AG04449 (cell line): ENCODE measurements at regions of chr1 and their contacts with region 1.

Region 1: GRCh38 chr1:160219062-160219929 is 14.1 kb downstream of the PEA15 start:
- DNase-seq: peak; percentile 36
- H3K4me3 ChIP-seq: no peak overlapping the region
- CTCF ChIP-seq: peak; percentile 79

Region 2: DNA sequence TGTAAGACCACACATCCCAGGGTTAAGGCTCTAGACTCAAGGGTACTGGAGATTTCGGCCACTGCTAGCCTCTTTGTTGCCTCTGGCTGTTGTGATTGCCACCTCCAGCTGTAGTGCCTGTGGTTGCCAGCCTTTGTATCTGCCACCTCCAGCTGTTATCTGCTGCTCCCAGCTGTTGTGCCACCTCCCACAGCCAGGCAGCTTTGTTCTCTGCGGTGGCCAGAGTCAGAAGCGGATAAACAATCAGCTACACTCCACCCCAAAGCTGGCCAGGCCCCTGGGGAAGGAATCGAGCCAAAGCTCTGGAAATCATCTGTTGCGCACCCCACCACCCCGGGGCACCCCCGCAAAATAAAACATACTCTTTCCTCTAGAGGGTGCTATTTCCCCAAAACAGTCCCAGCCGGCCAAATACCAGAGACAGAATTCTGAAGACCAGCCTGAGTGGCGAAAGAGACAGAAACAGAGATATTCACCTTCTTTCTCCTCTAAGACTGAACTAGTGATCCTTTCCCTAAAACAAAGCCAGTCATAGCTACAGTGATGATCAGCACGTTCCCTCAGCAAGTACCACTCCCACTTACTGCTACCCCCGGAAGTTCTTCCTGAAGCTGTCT is 172.7 kb before region 1 on chr1:
- CTCF ChIA-PET with region 1: interaction called, 18 read pairs
- POLR2A ChIA-PET with region 1: no interaction called
- DNase-seq: no peak
- H3K4me3 ChIP-seq: peak overlapping the region; percentile 15; the same call in 1 of the 2 replicates
- CTCF ChIP-seq: peak; percentile 39

Region 3: GRCh38 chr1:160085686-160086455 is 133.4 kb before region 1 on chr1:
- CTCF ChIA-PET with region 1: interaction called, 62 read pairs
- POLR2A ChIA-PET with region 1: no interaction called
- DNase-seq: no peak
- H3K4me3 ChIP-seq: no peak overlapping the region
- CTCF ChIP-seq: peak; percentile 91

Region 4: GRCh38 chr1:160124705-160125478 is 94.4 kb before region 1 on chr1:
- CTCF ChIA-PET with region 1: interaction called, 23 read pairs
- POLR2A ChIA-PET with region 1: no interaction called
- DNase-seq: peak; percentile 45
- H3K4me3 ChIP-seq: no peak overlapping the region
- CTCF ChIP-seq: peak; percentile 20

Region 5: GRCh38 chr1:160193091-160193819 is 26.0 kb before region 1 on chr1:
- CTCF ChIA-PET with region 1: interaction called, 186 read pairs
- POLR2A ChIA-PET with region 1: interaction called, 10 read pairs
- DNase-seq: peak; percentile 33
- H3K4me3 ChIP-seq: no peak overlapping the region
- CTCF ChIP-seq: peak; percentile 99

Region 6: GRCh38 chr1:160232911-160233310 is 13.6 kb after region 1 on chr1:
- CTCF ChIA-PET with region 1: interaction called, 35 read pairs
- POLR2A ChIA-PET with region 1: no interaction called
- DNase-seq: no peak
- H3K4me3 ChIP-seq: no peak overlapping the region
- CTCF ChIP-seq: no peak

Region 7: GRCh38 chr1:160251687-160252526 is 32.6 kb after region 1 on chr1:
- CTCF ChIA-PET with region 1: interaction called, 63 read pairs
- POLR2A ChIA-PET with region 1: no interaction called
- DNase-seq: no peak
- H3K4me3 ChIP-seq: no peak overlapping the region
- CTCF ChIP-seq: peak; percentile 54

Region 8: DNA sequence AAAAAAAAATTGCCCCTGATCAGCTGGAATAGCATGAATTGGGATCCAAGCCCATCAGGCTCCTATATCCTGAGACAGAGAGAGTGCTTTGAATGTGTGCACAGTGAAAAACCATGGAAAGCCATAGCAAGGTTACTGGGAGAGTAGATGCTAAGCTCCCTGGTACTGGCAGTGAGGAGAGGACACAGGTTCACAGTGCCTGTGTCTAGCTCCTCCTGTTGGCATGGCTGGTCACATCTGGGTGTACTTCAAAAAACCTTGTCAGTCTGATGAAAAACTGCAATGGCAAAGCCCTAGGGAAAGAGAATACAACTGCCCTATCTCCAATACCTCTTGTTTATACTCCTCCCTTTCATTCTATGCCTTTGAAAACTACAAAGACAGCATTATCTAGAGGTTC is 110.8 kb after region 1 on chr1:
- CTCF ChIA-PET with region 1: no interaction called
- POLR2A ChIA-PET with region 1: no interaction called
- DNase-seq: no peak
- H3K4me3 ChIP-seq: no peak overlapping the region
- CTCF ChIP-seq: no peak

Region 9: GRCh38 chr1:160597705-160598104 is 378.4 kb after region 1 on chr1:
- CTCF ChIA-PET with region 1: no interaction called
- POLR2A ChIA-PET with region 1: no interaction called
- DNase-seq: no peak
- H3K4me3 ChIP-seq: no peak overlapping the region
- CTCF ChIP-seq: no peak

Region 10: DNA sequence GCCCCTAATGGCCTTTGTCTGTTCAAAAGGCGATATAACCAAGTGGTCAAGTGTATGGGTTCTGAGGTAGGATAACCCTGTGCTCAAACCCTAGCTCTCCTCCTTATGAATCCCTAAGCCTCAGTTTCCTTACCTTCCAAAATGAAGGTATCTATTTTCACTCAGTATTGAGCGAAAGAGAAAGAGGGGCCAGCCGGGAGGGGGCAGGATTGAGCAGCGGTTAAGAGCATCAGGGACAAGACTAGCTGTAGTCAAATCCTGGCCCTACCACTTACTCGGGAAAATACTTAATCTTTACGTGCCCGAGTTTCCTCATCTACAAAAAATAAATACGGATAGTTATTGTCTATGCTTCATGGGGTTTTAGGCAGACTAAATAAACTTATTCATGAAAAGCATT is 602.3 kb after region 1 on chr1:
- CTCF ChIA-PET with region 1: no interaction called
- POLR2A ChIA-PET with region 1: no interaction called
- DNase-seq: no peak
- H3K4me3 ChIP-seq: no peak overlapping the region
- CTCF ChIP-seq: no peak